Vagina (tissue), 2 donors: ENCODE measurements at regions of chr14 and their contacts with region 1.

Region 1: GRCh38 chr14:22556990-22557623 is 31.9 kb downstream of the DAD1 start:
- DNase-seq: no peak
- H3K4me3 ChIP-seq: peak overlapping the region; percentile 18 to 42
- H3K27ac ChIP-seq: peak overlapping the region; percentile 43
- H3K4me1 ChIP-seq: peaks cover 43% of the 10 kb centered on the region
- H3K27me3 ChIP-seq: no peaks in the 10 kb centered on the region
- CTCF ChIP-seq: peak; percentile 100
- POLR2A ChIP-seq: no peak

Region 2: GRCh38 chr14:22386924-22387775 is 170.0 kb before region 1 on chr14:
- intact Hi-C with region 1: loop called (anchors 10 kb)
- DNase-seq: peak in 1 of 2 donors; percentile 69
- H3K4me3 ChIP-seq: no peak overlapping the region
- H3K27ac ChIP-seq: no peak overlapping the region
- H3K4me1 ChIP-seq: no peaks in the 10 kb centered on the region
- H3K27me3 ChIP-seq: no peaks in the 10 kb centered on the region
- CTCF ChIP-seq: peak; percentile 54 to 87 (median 71)
- POLR2A ChIP-seq: no peak

Region 3: GRCh38 chr14:22657861-22658260 is 100.8 kb after region 1 on chr14:
- intact Hi-C with region 1: no loop called
- DNase-seq: peak in 1 of 2 donors; percentile 13
- H3K4me3 ChIP-seq: no peak overlapping the region
- H3K27ac ChIP-seq: no peak overlapping the region
- H3K4me1 ChIP-seq: no peaks in the 10 kb centered on the region
- H3K27me3 ChIP-seq: no peaks in the 10 kb centered on the region
- CTCF ChIP-seq: no peak
- POLR2A ChIP-seq: no peak

Region 4: DNA sequence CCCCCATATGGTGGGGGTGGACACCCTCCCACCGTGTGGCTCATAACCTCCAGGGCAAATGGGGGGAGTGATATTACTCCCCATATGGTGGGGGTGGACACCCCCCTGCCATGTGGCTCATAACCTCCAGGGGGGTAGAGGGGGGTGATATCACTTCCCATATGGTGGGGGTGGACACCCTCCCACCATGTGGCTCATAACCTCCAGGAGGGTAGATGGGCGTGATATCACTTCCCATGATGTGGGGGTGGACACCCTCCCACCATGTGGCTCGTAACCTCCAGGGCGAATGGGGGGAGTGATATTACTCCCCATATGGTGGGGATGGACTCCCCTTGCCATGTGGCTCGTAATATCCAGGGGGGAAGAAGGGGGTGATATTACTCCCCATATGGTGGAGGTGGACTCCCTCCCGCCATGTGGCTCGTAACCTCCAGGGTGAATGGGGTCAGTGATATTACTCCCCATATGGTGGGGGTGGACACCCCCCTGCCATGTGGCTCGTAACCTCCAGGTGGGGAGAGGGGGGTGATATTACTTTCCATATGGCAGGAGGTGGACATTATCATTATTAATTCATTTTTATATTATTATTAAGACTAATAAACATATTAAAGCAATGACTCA is 158.2 kb after region 1 on chr14:
- intact Hi-C with region 1: loop called (anchors 10 kb)
- DNase-seq: no peak
- H3K4me3 ChIP-seq: no peak overlapping the region
- H3K27ac ChIP-seq: no peak overlapping the region
- H3K4me1 ChIP-seq: peaks cover 8% of the 10 kb centered on the region
- H3K27me3 ChIP-seq: no peaks in the 10 kb centered on the region
- CTCF ChIP-seq: no peak
- POLR2A ChIP-seq: no peak